Activated naive CD8-positive, alpha-beta T cell treated with anti-CD3 and anti-CD28 coated beads, Interleukin-2, amount 10 ng/mL, durations not matched to agents 7 days and 5 days (primary cell): ENCODE measurements at regions of chr15 and their contacts with region 1.

Region 1: DNA sequence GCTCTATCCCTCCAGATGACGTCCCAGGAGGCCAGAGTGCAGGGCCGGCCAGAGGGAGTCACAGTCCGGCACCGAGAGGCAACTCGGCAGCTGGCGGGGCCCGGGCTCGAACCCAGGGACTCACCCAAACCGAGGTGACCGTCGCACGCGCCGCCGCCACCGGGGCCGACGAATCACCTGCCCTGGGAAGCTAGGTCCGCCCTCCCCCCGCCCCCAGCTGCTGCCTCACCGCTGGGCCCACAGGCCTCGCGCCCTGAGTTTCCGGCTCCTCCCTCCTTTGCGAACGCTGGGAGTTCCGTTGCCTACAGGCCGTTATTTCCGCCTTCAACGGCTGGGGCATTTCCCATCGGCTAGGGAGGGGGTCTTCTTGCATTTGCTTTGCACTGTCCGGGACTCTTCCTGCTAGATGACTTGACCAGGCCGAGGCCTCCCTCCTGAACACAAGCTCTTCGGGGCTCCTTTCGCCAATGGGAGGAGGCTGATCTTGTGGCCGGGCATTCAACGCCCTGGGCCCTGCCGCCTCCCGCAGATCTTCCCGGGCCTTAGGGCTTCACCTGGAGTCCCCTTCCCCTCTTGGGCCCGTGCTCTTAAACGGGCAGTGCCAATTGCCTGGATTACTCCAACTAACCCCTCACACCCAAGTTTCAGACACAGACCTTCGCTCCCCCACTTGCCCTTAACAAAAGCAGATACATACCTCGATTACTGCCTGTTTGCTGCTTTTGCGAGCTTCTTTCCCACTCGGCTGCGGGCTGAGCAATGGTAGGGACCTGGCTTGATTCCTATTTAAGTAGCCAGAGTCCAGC is at the start of gene SNUPN:
- DNase-seq: peak; percentile 91
- ATAC-seq: peak; percentile 83
- H3K4me3 Mint-ChIP-seq: peak within 1 kb of the TSS; percentile 88
- H3K27ac Mint-ChIP-seq: peak within 1 kb of the TSS; percentile 92
- H3K4me1 Mint-ChIP-seq: peaks cover 27% of the 10 kb centered on the region
- H3K27me3 Mint-ChIP-seq: no peaks in the 10 kb centered on the region
- total RNA-seq, gene SNUPN: 27.1 to 30.4 TPM

Region 2: DNA sequence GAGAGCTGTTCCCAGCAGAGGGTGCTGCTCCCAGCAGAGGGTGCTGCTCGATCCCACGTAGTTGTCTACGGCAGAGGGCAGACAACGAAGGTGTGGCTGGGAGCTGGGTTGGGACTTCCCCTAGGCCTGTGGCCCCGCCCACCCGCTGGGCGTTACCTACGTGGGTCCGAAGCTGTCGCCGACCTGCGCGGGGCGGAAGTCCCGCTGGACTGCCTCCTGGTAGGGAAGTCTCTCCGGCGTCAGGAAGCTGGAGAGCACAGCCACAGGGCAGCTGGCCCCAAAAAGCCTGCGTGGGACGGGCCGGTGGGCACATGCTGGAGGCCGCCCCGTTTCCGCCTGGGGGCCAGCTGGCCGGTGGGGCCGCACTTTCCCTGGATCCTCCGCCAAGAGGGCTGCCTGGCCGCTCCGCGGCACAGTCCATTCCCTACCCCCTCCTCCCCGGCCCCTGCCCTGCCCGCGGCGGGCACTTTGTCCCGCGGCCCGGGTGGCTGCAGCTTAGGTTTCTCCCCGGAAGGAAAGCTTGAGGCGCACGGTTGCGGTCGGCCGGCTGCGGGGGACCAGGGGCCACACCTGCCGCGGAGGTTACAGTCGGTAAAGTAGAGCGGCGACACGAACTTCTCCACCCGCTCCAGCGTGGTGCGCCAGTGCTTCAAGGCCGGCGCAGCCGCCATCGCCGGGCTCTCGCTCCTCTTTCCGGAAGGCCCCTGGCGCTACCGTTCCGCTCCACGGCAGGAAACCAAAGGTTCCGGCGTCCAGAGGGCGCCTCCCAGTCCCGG is 257.6 kb before region 1 on chr15 and contains the start of gene MAN2C1:
- POLR2A ChIA-PET with region 1: interaction called, 14 read pairs
- DNase-seq: peak; percentile 94
- ATAC-seq: peak; percentile 91
- H3K4me3 Mint-ChIP-seq: peak within 1 kb of the TSS; percentile 89
- H3K27ac Mint-ChIP-seq: peak within 1 kb of the TSS; percentile 91
- H3K4me1 Mint-ChIP-seq: peaks cover 22% of the 10 kb centered on the region
- H3K27me3 Mint-ChIP-seq: no peaks in the 10 kb centered on the region
- total RNA-seq, gene MAN2C1: 232 to 235 TPM

Region 3: GRCh38 chr15:75578948-75579920 is 46.5 kb before region 1 on chr15 and contains the start of gene PTPN9:
- POLR2A ChIA-PET with region 1: interaction called, 25 read pairs
- DNase-seq: peak; percentile 78
- ATAC-seq: peak; percentile 83
- H3K4me3 Mint-ChIP-seq: peak within 1 kb of the TSS; percentile 94
- H3K27ac Mint-ChIP-seq: peak within 1 kb of the TSS; percentile 90
- H3K4me1 Mint-ChIP-seq: peaks cover 18% of the 10 kb centered on the region
- H3K27me3 Mint-ChIP-seq: no peaks in the 10 kb centered on the region
- total RNA-seq, gene PTPN9: 35.8 to 37.5 TPM

Region 4: GRCh38 chr15:75597667-75598341 is 27.9 kb before region 1 on chr15:
- POLR2A ChIA-PET with region 1: interaction called, 23 read pairs
- DNase-seq: peak; percentile 47
- ATAC-seq: peak; percentile 89
- H3K4me3 Mint-ChIP-seq: peak overlapping the region; percentile 76
- H3K27ac Mint-ChIP-seq: peak overlapping the region; percentile 92
- H3K4me1 Mint-ChIP-seq: peaks cover 34% of the 10 kb centered on the region
- H3K27me3 Mint-ChIP-seq: no peaks in the 10 kb centered on the region

Region 5: GRCh38 chr15:75606711-75607699 is 18.7 kb before region 1 on chr15:
- POLR2A ChIA-PET with region 1: interaction called, 37 read pairs
- DNase-seq: peak; percentile 54
- ATAC-seq: peak; percentile 90
- H3K4me3 Mint-ChIP-seq: peak overlapping the region; percentile 84
- H3K27ac Mint-ChIP-seq: peak overlapping the region; percentile 98
- H3K4me1 Mint-ChIP-seq: peaks cover 42% of the 10 kb centered on the region
- H3K27me3 Mint-ChIP-seq: no peaks in the 10 kb centered on the region

Region 6: GRCh38 chr15:75723847-75724660 is 98.3 kb after region 1 on chr15:
- POLR2A ChIA-PET with region 1: no interaction called
- DNase-seq: no peak
- ATAC-seq: peak; percentile 22
- H3K4me3 Mint-ChIP-seq: no peak overlapping the region
- H3K27ac Mint-ChIP-seq: no peak overlapping the region
- H3K4me1 Mint-ChIP-seq: peaks cover 6% of the 10 kb centered on the region
- H3K27me3 Mint-ChIP-seq: peaks cover 8% of the 10 kb centered on the region